HEK293 (cell line): ENCODE measurements at regions of chr22 and their contacts with region 1.

Region 1: GRCh38 chr22:36856121-36856791 is 4.5 kb upstream of the NCF4 start:
- H3K4me3 ChIP-seq: no peak overlapping the region
- H3K27ac ChIP-seq: no peak overlapping the region
- H3K4me1 ChIP-seq: 0 out of 2 replicates have a peak, but pooled peaks cover 3% of the 10 kb centered on the region
- CTCF ChIP-seq: peak; percentile 100

Region 2: GRCh38 chr22:36546092-36546804 is 310.0 kb before region 1 on chr22:
- CTCF ChIA-PET with region 1: interaction called, 56 read pairs
- POLR2A ChIA-PET with region 1: no interaction called
- H3K4me3 ChIP-seq: no peak overlapping the region
- H3K27ac ChIP-seq: no peak overlapping the region
- H3K4me1 ChIP-seq: no peaks in the 10 kb centered on the region
- CTCF ChIP-seq: peak; percentile 57

Region 3: DNA sequence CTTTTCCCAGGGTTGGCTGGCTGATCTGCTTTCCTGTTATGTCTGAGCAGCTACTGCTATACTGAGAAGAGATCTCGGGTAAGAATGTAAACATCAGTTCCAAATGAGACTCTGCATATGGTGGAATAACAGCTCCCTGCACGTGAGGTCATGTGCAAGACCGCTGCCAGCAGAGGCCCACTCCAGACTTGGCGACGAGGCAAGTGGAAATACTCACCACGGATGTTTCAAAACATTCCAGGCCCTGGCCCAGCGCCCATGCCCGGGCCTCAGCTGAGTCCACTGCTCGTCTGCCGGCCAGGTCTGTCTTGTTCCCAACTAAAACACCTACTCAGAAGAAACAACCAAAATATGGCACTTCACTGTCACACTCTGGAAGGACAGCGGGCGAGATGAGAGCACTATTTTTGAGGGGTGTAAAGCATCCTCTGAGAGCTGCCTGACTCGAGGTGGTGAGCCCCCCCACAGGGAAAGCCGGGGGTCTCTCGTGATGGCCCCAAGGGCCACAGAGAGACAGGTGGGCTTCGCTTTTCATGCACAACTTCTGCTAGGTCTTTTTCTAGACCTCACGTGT is 93.5 kb before region 1 on chr22:
- CTCF ChIA-PET with region 1: interaction called, 19 read pairs
- POLR2A ChIA-PET with region 1: no interaction called
- H3K4me3 ChIP-seq: no peak overlapping the region
- H3K27ac ChIP-seq: no peak overlapping the region
- H3K4me1 ChIP-seq: no peaks in the 10 kb centered on the region
- CTCF ChIP-seq: no peak

Region 4: GRCh38 chr22:36790648-36791047 is 65.6 kb before region 1 on chr22:
- CTCF ChIA-PET with region 1: interaction called, 161 read pairs
- POLR2A ChIA-PET with region 1: no interaction called
- H3K4me3 ChIP-seq: no peak overlapping the region
- H3K27ac ChIP-seq: no peak overlapping the region
- H3K4me1 ChIP-seq: no peaks in the 10 kb centered on the region; the same call in 1 of the 2 replicates
- CTCF ChIP-seq: no peak

Region 5: GRCh38 chr22:36816636-36817524 is 39.4 kb before region 1 on chr22 and contains the start of gene PVALB:
- CTCF ChIA-PET with region 1: interaction called, 18 read pairs
- POLR2A ChIA-PET with region 1: no interaction called
- H3K4me3 ChIP-seq: peak within 1 kb of the TSS; percentile 28
- H3K27ac ChIP-seq: no peak within 1 kb of the TSS
- H3K4me1 ChIP-seq: peaks cover 12% of the 10 kb centered on the region
- CTCF ChIP-seq: no peak

Region 6: GRCh38 chr22:36873680-36874537 is 17.7 kb after region 1 on chr22:
- CTCF ChIA-PET with region 1: interaction called, 75 read pairs
- POLR2A ChIA-PET with region 1: no interaction called
- H3K4me3 ChIP-seq: no peak overlapping the region
- H3K27ac ChIP-seq: no peak overlapping the region
- H3K4me1 ChIP-seq: no peaks in the 10 kb centered on the region
- CTCF ChIP-seq: peak; percentile 22; the same call in 1 of the 2 replicates

Region 7: DNA sequence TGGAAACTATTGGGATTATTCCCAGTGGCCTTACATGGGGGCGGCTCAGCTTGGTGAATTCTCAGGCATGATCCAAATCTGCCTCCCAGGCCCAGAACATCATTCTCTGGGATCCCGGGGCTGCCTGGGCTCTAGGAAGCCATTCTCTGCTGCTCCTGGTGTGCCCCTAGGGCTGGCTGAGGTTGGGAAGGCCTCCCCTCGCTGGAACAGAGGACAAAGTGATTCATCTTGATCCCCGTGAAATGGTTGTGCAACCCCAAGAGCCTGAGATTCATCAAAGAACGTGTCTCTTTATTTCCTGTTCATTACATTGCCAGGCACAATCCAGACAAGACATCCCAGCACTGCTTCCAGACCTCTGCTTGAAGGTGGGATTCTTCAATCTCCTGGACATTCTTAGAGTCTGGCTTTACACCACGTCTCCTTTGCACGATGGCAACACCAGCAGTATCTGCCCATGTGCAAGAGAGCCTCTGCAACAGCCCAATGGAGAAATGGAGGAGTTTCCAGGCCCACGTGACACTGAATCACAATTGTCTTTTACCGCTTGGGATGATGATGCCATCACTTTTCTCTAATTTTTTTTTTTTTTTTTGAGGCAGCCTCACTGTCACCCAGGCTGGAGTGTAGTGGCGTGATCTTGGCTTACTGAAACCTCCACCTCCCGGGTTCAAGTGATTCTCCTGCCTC is 110.7 kb after region 1 on chr22:
- CTCF ChIA-PET with region 1: interaction called, 38 read pairs
- POLR2A ChIA-PET with region 1: no interaction called
- H3K4me3 ChIP-seq: no peak overlapping the region
- H3K27ac ChIP-seq: no peak overlapping the region
- H3K4me1 ChIP-seq: no peaks in the 10 kb centered on the region
- CTCF ChIP-seq: no peak